Motor neuron (in vitro differentiated cells): ENCODE measurements at regions of chr14 and their contacts with region 1.

Region 1: GRCh38 chr14:23483236-23483854 is 13.8 kb downstream of the NGDN start:
- ATAC-seq: peak; percentile 87 to 98 (median 88)
- H3K4me3 ChIP-seq: no peak overlapping the region
- H3K27ac ChIP-seq: peak overlapping the region; percentile 76 to 94
- H3K4me1 ChIP-seq: peaks cover 22 to 34% of the 10 kb centered on the region in 2 donors

Region 2: DNA sequence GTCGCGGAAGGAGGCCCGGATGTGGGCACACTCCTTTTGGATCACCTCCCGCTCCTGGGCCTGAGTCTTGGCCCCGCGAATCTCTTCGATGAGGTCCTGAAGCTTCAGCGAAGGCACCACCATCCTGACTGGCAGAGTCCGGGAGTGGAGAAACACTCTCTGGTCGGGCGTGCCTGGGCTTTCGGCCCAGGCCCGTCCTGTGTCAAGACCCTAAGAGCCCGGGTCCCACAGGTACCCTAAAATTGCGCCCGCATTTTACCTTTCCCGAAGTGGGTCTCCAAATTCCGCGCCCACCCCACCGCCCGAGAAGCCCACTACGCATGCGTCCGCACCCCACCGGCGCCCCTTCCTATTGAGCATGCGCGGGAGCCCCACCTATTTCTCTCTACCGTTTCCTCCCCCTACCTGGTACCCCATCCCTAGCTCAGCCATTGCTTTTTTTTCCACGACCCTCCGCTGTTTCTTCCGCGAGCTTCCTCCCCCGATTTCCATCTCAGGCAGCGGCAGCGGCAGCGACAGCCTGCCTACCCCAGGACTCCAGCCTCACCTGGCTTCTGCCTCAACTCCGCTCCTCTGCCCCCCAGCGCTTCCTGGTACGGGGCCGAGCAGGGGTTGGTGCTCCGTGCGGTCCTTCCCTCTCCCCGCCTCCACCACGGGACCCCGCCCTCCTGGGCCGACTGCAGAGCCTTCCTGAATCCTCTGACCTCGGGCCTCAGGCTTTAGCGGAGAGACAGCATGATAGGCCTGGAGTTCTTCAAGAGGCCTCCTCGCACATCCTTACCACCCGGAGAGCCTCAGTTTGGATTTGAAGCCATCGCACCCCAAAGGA is 84.1 kb after region 1 on chr14 and contains the start of gene AP1G2:
- in situ Hi-C with region 1: loop called in 1 of 9 experiments (anchors 10 kb)
- ATAC-seq: peak; percentile 61 to 84 (median 73)
- H3K4me3 ChIP-seq: peak within 1 kb of the TSS; percentile 39 to 84 (median 56)
- H3K27ac ChIP-seq: peak within 1 kb of the TSS; percentile 69 to 75
- H3K4me1 ChIP-seq: peaks cover 32 to 35% of the 10 kb centered on the region in 2 donors
- total RNA-seq, gene AP1G2: 7.5 to 125 (median 25.5) TPM